ENCODE measurements at regions of chr12 and their contacts with region 1.

Region 1: DNA sequence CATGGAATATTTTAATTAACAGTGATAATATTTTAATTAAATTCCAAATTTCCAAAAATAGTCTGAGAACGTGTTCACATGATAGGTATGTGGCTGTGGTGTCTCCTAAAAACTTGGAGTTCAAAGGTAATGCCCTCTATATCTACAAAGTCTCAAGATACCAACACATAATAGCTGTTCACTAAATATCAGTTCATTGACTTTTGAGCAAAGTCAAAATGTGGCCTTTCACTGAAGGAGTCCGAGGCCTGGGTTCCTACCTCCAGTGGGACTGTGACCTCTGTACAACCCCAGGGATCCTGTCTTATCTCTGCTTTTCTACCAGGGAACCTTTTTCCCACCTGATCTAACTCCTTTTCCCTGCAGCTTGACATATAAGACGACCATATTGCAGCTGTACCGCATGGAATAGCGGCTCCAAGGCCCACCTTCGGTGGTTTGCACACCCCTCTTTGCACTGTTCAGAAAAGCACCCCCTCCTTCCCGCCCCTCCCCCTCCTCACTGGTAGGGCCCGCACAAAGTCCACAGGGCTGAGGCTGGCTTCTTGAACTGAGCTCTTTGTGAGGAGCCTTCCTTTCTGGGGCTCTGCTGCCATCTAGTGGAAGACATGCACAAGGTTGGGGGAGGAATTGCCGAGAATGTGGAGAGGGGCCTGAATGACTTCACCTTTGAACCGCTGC is 3.1 kb downstream of the CCND2 start:
- DNase-seq: peak; percentile 78
- CTCF ChIP-seq: peak; percentile 85

Region 2: DNA sequence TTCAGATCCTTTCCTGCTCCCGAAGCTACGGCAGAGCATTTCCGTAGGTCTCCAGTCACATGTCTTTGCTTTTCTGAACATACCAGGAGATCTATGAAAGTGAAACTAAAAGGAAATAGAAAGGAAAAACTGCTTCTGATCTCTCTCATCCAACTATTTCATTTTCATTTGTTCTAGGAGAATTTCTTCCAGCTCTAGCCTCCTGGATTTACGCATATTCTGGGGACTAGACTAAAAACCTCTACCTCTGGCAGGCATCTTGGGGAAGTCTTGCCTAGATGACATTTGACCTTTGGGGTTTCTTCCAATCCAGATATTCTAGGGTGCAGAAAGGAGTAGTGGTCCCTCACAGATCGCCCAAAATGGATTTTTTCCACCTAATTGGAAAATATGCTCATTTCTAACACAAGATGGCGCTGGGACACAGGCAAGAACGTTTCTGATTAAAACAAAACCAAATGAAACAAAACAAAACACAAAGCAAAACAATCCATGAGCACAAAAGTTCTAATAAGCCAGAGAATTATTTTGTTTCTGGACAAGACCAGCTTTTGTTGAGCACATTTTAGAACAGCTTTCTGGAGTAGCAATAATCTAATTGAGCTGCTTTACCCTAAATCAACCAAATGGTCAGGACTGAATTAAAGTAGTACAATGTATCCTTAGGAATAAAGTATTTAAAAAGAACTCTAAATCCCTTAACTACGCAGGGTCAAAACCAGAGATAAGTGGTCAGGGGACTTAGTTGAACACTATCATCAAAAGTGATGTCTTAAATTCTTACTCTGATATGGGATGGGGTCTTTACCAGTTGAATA is 391.2 kb before region 1 on chr12:
- CTCF ChIA-PET with region 1: interaction called, 196 read pairs
- POLR2A ChIA-PET with region 1: no interaction called
- DNase-seq: peak; percentile 36
- CTCF ChIP-seq: peak; percentile 78

Region 3: GRCh38 chr12:4037747-4038312 is 238.8 kb before region 1 on chr12:
- CTCF ChIA-PET with region 1: interaction called, 57 read pairs
- POLR2A ChIA-PET with region 1: no interaction called
- DNase-seq: no peak
- CTCF ChIP-seq: peak; percentile 46

Region 4: GRCh38 chr12:4118017-4118510 is 158.6 kb before region 1 on chr12:
- CTCF ChIA-PET with region 1: interaction called, 56 read pairs
- POLR2A ChIA-PET with region 1: no interaction called
- DNase-seq: peak; percentile 56
- CTCF ChIP-seq: no peak

Region 5: DNA sequence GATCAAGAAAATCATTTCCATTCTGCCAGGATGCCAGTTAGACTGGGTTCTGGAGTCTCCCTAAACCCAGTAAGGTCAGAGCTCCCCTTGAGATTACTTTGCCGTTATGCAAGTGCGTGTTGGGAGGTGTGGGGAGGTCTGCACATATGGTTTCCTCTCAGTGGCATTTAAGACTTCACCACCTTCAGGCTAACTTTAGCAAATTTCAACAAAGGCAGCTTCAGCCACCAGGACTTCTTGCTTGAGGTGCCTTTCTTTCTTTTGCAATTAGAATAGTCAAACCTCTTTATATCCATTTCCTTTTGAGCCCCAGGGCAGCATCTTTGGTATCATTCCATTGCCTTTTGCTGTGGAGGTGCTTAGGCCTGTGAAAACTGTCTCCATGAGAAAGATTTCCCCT is 120.3 kb before region 1 on chr12:
- CTCF ChIA-PET with region 1: interaction called, 10 read pairs
- POLR2A ChIA-PET with region 1: no interaction called
- DNase-seq: no peak
- CTCF ChIP-seq: no peak

Region 6: GRCh38 chr12:4287325-4288211 is 10.9 kb after region 1 on chr12:
- CTCF ChIA-PET with region 1: interaction called, 63 read pairs
- POLR2A ChIA-PET with region 1: interaction called, 5 read pairs
- DNase-seq: no peak
- CTCF ChIP-seq: no peak

Measured in GM10248 (cell line).